Posterior vena cava (tissue), 2 donors: ENCODE measurements at regions of chr16 and their contacts with region 1.

Region 1: GRCh38 chr16:27208796-27209195 is 5.5 kb downstream of the KDM8 start:
- DNase-seq: no peak

Region 2: GRCh38 chr16:25291580-25291979 is 1917.2 kb before region 1 on chr16:
- intact Hi-C with region 1: loop called in 1 of 2 experiments (anchors 5 kb)
- DNase-seq: no peak

Region 3: DNA sequence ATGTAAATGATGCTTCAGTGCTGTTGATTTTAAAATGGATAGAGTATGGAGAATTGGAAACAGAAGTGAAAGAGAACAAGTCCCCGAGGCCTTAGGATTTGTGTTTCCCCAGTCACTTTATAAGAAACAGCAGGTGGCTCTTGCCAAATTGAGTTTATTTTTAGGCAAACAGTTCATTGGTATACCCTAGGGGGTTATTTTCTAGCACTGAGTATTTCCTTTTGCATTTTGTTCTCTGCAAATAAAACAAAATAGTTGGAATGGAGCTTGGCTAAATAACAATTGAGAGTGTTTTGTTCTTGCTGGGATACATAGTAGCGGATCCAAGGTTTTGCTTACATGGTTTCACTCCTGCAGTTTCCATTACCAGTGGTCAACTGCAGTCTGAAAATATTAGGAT is 733.2 kb before region 1 on chr16:
- intact Hi-C with region 1: no loop called
- DNase-seq: no peak

Region 4: DNA sequence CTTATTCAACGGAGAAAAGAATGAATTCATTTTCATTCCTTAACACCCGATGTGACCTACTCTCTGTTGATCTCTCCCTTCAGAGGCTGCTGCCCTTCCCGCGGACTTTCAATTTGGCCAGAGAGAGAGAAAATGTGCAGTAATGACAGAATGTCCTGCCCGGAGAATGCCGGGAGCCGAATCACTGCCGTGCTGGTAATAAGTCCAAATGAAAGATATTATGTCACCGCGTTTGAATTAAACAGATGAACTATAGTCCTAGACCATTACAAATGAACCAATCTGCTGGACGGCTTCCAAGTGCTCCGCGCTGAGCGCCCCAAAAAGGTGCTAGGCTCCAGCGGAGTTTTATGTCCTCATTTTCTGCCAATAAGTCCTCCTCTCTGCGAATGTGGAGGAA is 156.8 kb before region 1 on chr16:
- intact Hi-C with region 1: no loop called
- DNase-seq: no peak

Region 5: GRCh38 chr16:27080870-27081269 is 127.9 kb before region 1 on chr16:
- intact Hi-C with region 1: no loop called
- DNase-seq: no peak